AG04449 (cell line): ENCODE measurements at regions of chr7 and their contacts with region 1.

Region 1: GRCh38 chr7:98745722-98746318 is 124.0 kb downstream of the TMEM130 start:
- DNase-seq: no peak
- H3K4me3 ChIP-seq: no peak overlapping the region
- CTCF ChIP-seq: peak; percentile 77

Region 2: DNA sequence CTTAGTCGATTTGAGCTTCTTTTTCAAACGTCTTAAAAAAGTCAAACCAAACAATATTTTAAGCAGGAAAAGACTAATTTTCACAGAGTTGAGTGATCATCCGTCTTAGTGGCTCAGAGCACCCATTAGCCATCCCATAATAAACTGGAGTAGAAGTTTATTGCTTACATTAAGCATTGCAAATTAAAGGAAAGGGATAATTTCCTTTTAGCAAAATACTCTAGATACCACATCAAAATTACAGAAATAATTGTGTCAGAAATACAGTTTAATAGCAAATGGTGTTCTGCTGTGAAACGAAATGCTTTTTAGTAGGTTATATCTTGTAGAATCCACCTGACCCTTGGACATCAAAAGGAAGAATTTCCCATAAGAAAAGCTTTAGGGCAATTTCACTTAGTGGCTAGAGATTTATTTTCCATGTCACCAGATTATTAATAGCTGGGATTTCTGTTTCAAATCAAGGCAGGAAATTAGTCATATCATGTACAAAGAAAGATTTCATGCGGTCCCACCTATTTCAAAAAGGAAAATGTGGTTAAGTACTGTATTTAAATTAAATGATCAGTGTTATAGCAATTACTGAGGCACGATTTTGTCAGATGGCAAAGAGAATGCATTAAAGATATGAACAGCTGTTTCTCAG is 32.5 kb before region 1 on chr7:
- CTCF ChIA-PET with region 1: no interaction called
- POLR2A ChIA-PET with region 1: no interaction called
- DNase-seq: no peak
- H3K4me3 ChIP-seq: no peak overlapping the region
- CTCF ChIP-seq: no peak

Region 3: GRCh38 chr7:98729121-98729520 is 16.7 kb before region 1 on chr7:
- CTCF ChIA-PET with region 1: interaction called, 21 read pairs
- POLR2A ChIA-PET with region 1: no interaction called
- DNase-seq: no peak
- H3K4me3 ChIP-seq: no peak overlapping the region
- CTCF ChIP-seq: no peak

Region 4: GRCh38 chr7:98735801-98736200 is 10.0 kb before region 1 on chr7:
- CTCF ChIA-PET with region 1: interaction called, 21 read pairs
- POLR2A ChIA-PET with region 1: no interaction called
- DNase-seq: no peak
- H3K4me3 ChIP-seq: no peak overlapping the region
- CTCF ChIP-seq: no peak